Activated CD4-positive, alpha-beta T cell treated with anti-CD3 and anti-CD28 coated beads for 36 hours (primary cell): ENCODE measurements at regions of chr9 and their contacts with region 1.

Region 1: GRCh38 chr9:76419782-76420380 is 25.7 kb upstream of the RFK start:
- DNase-seq: no peak
- ATAC-seq: no peak
- H3K4me3 Mint-ChIP-seq: no peak overlapping the region
- H3K27ac Mint-ChIP-seq: no peak overlapping the region
- H3K4me1 Mint-ChIP-seq: peaks cover 22% of the 10 kb centered on the region
- H3K27me3 Mint-ChIP-seq: peaks cover 2% of the 10 kb centered on the region

Region 2: DNA sequence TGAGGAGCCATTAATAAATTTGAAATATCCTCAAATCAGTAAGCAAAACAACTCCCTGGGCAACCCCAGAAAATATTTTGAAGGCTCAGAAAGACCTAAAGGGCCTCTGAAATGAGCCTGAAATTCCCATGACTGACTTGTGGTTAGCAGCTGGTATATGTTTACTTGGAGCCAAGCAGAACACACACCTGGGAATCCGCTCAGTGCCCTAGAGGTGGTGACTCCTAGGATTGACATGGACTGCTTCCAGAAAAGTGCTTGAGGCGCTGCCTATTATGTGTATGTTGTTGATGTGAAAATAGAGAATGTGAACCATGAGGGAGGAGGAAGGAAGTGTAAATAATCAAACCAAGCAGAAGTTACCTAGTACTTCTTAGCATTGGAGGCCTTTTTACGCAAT is 40.4 kb before region 1 on chr9:
- CTCF ChIA-PET with region 1: no interaction called
- POLR2A ChIA-PET with region 1: no interaction called
- intact Hi-C with region 1: loop called in 1 of 2 experiments (anchors 1 kb)
- DNase-seq: no peak
- ATAC-seq: no peak
- H3K4me3 Mint-ChIP-seq: no peak overlapping the region
- H3K27ac Mint-ChIP-seq: no peak overlapping the region
- H3K4me1 Mint-ChIP-seq: no peaks in the 10 kb centered on the region
- H3K27me3 Mint-ChIP-seq: no peaks in the 10 kb centered on the region

Region 3: DNA sequence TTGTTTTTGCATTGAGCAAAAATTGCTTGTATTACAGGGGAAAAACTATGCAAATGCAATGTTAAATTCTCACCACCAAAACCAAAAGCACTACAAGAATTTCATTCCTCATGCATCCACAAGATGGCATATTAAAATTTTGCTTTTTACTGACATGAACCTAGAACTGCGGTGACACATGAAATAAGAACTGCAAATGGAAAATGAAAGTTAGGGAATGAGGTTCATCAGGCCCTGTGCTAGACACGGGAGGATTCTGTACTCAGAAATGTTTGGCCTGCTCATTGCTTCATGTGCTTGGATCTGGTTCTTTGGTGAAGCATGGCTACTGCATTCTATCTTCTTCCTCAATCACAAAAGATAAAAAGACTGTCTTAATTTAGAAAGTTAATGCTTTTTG is 16.5 kb before region 1 on chr9:
- CTCF ChIA-PET with region 1: interaction called, 6 read pairs
- POLR2A ChIA-PET with region 1: no interaction called
- intact Hi-C with region 1: loop called (anchors 1 kb)
- DNase-seq: peak; percentile 30
- ATAC-seq: peak; percentile 94
- H3K4me3 Mint-ChIP-seq: peak overlapping the region; percentile 16
- H3K27ac Mint-ChIP-seq: peak overlapping the region; percentile 62
- H3K4me1 Mint-ChIP-seq: peaks cover 11% of the 10 kb centered on the region
- H3K27me3 Mint-ChIP-seq: no peaks in the 10 kb centered on the region

Region 4: GRCh38 chr9:76456202-76456926 is 36.5 kb after region 1 on chr9:
- CTCF ChIA-PET with region 1: no interaction called
- POLR2A ChIA-PET with region 1: no interaction called
- intact Hi-C with region 1: no loop called
- DNase-seq: peak; percentile 47
- ATAC-seq: no peak
- H3K4me3 Mint-ChIP-seq: no peak overlapping the region
- H3K27ac Mint-ChIP-seq: no peak overlapping the region
- H3K4me1 Mint-ChIP-seq: peaks cover 26% of the 10 kb centered on the region
- H3K27me3 Mint-ChIP-seq: no peaks in the 10 kb centered on the region

Region 5: DNA sequence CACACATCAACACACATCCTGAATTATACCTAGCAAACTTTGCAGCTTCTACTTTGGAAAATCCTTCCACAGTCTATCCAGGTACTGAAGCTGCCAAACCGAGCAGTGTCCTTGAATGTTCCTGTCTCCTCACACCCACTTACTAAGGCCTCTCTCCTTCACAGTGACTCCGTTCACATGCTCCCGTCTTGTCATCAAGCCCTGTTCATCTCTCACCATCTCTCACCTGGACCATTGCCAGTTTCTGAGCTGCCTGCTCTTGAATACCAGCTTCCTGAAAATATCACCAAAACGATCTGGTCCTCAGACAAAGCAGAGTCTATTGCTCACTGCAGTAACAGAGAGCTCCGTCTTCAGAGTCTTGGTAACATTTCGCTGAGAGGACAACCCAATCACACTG is 96.5 kb after region 1 on chr9:
- CTCF ChIA-PET with region 1: no interaction called
- POLR2A ChIA-PET with region 1: no interaction called
- intact Hi-C with region 1: no loop called
- DNase-seq: peak; percentile 16
- ATAC-seq: peak; percentile 16
- H3K4me3 Mint-ChIP-seq: no peak overlapping the region
- H3K27ac Mint-ChIP-seq: no peak overlapping the region
- H3K4me1 Mint-ChIP-seq: peaks cover 6% of the 10 kb centered on the region
- H3K27me3 Mint-ChIP-seq: peaks cover 4% of the 10 kb centered on the region